GM12878 (cell line): ENCODE measurements at regions of chr14 and their contacts with region 1.

Region 1: GRCh38 chr14:32800320-32800719 is 138.4 kb upstream of the NPAS3 start:
- DNase-seq: no peak
- ATAC-seq: no peak
- H3K4me3 ChIP-seq: no peak overlapping the region
- H3K27ac ChIP-seq: no peak overlapping the region
- H3K4me1 ChIP-seq: no peaks in the 10 kb centered on the region
- H3K27me3 ChIP-seq: no peaks in the 10 kb centered on the region
- CTCF ChIP-seq: no peak
- EP300 ChIP-seq: no peak
- POLR2A ChIP-seq: no peak
- RAD21 ChIP-seq: no peak

Region 2: DNA sequence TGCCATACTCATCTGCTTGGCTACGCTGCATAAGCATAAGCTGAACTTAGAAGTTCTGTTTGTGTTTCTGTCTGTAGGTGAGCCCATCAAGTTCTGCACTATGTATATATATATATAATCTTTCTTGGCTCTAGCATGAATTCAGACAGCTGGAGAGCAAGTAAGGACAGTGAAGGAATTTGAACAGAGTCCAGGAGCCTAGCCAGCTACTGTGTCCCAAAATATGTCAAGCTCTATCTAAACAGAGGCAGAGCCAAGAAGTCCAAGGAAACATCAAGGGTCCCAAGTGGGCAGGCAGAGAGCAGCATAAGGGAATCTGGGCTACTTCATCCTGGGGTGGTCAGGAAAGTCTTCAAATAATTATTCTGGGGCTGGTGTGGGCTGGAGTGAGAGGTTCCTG is 19.9 kb after region 1 on chr14:
- CTCF ChIA-PET with region 1: no interaction called
- POLR2A ChIA-PET with region 1: no interaction called
- RAD21 ChIA-PET with region 1: no interaction called
- SMC1A ChIA-PET with region 1: no interaction called
- in situ Hi-C with region 1: no loop called
- intact Hi-C with region 1: no loop called
- DNase-seq: no peak
- ATAC-seq: no peak
- H3K4me3 ChIP-seq: no peak overlapping the region
- H3K27ac ChIP-seq: no peak overlapping the region
- H3K4me1 ChIP-seq: no peaks in the 10 kb centered on the region
- H3K27me3 ChIP-seq: no peaks in the 10 kb centered on the region
- CTCF ChIP-seq: no peak
- EP300 ChIP-seq: no peak
- POLR2A ChIP-seq: no peak
- RAD21 ChIP-seq: no peak

Region 3: GRCh38 chr14:32835924-32836323 is 35.6 kb after region 1 on chr14:
- CTCF ChIA-PET with region 1: no interaction called
- POLR2A ChIA-PET with region 1: no interaction called
- RAD21 ChIA-PET with region 1: no interaction called
- SMC1A ChIA-PET with region 1: no interaction called
- in situ Hi-C with region 1: no loop called
- intact Hi-C with region 1: loop called (anchors 1 kb)
- DNase-seq: no peak
- ATAC-seq: no peak
- H3K4me3 ChIP-seq: no peak overlapping the region
- H3K27ac ChIP-seq: no peak overlapping the region
- H3K4me1 ChIP-seq: no peaks in the 10 kb centered on the region
- H3K27me3 ChIP-seq: no peaks in the 10 kb centered on the region
- CTCF ChIP-seq: no peak
- EP300 ChIP-seq: no peak
- POLR2A ChIP-seq: no peak
- RAD21 ChIP-seq: no peak